Heart right ventricle (tissue), 16 donors: ENCODE measurements at regions of chr19 and their contacts with region 1.

Region 1: DNA sequence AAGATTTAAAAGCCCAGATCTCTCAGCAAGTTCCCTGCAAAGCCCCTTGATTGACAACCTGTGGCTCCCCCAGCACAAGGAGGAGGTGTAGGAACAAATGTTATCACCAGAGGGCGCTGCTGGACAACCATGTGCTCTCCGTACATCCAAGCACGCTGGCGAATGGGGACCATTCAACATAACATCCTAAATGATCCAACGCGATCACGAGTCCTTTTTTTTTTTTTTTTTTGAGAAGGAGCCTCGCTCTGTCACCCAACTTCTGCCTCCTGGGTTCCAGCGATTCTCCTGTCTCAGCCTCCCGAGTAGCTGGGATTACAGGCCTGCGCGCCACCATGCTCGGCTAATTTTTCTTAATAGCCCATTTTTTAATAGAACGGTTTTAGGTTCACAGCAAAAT is 52.0 kb downstream of the NWD1 start:
- DNase-seq: peak; percentile 50 to 80
- ATAC-seq: peak; percentile 67 to 89 (median 84)
- H3K4me3 ChIP-seq: no peak overlapping the region
- H3K27ac ChIP-seq: no peak overlapping the region
- H3K4me1 ChIP-seq: no peaks in the 10 kb centered on the region
- H3K27me3 ChIP-seq: peaks cover 0 to 3% (median 0%) of the 10 kb centered on the region in 7 donors
- CTCF ChIP-seq: peak; percentile 75 to 91 (median 83)

Region 2: GRCh38 chr19:16814526-16815100 is 43.0 kb after region 1 on chr19:
- intact Hi-C with region 1: no loop called
- DNase-seq: no peak
- ATAC-seq: no peak
- H3K4me3 ChIP-seq: no peak overlapping the region
- H3K27ac ChIP-seq: no peak overlapping the region
- H3K4me1 ChIP-seq: no peaks in the 10 kb centered on the region
- H3K27me3 ChIP-seq: no peaks in the 10 kb centered on the region
- CTCF ChIP-seq: no peak

Region 3: DNA sequence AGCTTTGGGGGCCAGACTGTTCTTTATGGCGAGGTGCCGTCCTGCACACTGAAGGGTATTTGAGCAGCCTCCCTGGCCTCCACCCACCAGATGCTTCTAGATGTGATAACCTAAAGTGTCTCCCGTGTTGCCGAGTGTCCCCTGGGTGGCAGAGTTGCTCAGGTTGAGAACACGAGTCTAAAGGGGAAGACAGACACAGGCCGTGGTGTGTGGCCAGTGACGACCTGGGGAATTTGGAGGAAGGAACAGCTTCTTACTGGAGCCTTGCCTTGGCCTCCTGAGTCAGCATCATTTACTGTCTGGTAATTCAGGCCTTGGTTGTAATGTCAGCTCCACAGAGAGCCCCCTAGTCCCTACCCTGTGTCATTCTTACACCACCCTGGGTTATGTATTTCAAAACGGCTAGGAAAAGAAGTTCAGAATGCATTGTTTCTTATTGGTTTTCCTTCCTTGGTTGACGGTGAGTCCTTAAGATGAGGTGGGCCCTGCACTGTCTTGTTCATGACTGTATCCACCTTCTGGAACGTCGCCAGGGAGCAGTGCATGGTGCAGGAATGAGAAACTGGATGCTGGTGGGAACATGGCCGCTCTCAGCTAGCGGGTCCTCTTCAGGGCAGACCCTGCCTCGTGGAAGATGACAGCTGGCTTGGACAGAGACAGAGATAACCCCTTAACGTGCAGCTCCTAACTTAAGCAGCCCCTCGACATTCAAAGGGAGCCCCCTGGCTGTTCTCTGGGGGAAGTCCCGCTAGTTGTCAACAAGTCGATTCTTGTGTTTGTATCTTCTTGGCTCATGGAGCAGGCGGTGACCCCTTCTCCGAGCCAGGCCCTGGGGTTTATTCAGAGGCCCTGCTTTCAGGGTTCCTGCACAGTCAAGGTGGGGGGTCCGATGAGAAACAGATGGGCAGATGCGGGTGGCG is 64.8 kb after region 1 on chr19:
- intact Hi-C with region 1: loop called in 2 of 10 experiments (anchors 5 to 10 kb)
- DNase-seq: no peak
- ATAC-seq: peak; percentile 31 to 72 (median 48)
- H3K4me3 ChIP-seq: no peak overlapping the region
- H3K27ac ChIP-seq: no peak overlapping the region
- H3K4me1 ChIP-seq: peaks cover 0 to 26% (median 1%) of the 10 kb centered on the region in 9 donors
- H3K27me3 ChIP-seq: no peaks in the 10 kb centered on the region
- CTCF ChIP-seq: peak in 2 of 9 donors; percentile 22 to 28

Region 4: DNA sequence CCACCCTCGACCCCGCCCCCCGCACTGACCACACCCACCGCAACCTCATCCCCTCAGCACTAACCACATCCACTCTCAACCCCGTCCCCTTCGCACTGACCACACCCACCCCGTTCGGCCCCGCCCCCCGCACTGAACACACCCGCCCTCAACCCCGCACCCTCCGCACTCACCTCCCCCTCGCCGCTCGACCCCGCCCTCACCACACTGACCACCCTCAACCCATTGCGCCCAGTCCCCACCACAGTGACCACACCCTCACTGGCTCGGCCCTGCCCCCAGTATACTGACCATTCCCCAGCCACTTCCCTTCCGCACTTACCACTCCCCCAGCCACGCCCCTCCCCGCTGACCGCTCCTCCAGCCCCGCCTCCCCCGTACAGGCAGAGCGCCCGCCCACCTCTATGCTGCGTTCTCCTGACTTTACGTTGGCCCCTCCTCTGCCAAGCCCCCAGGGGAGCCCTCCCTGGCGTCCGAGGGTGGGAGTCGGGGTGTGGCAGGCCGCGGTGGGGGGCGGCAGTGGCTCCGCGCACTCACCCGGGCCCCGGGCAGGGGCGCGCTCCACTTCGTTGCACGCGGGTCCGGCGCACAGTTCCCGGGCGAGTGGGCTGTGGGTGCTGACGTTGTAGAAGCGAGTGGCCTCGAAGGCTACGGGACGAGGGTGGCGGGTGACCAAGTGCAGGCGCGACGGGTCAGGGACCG is 125.7 kb after region 1 on chr19:
- intact Hi-C with region 1: loop called in 8 of 10 experiments (anchors 2 to 10 kb)
- DNase-seq: peak; percentile 96 to 97
- ATAC-seq: peak; percentile 90 to 94 (median 92)
- H3K4me3 ChIP-seq: peak overlapping the region; percentile 19 to 76 (median 66)
- H3K27ac ChIP-seq: peak overlapping the region; percentile 46 to 87 (median 74)
- H3K4me1 ChIP-seq: peaks cover 0 to 34% (median 15%) of the 10 kb centered on the region in 9 donors
- H3K27me3 ChIP-seq: peaks cover 0 to 19% (median 0%) of the 10 kb centered on the region in 7 donors
- CTCF ChIP-seq: no peak

Region 5: GRCh38 chr19:17052439-17053210 is 281.0 kb after region 1 on chr19:
- intact Hi-C with region 1: loop called (anchors 1 to 5 kb)
- DNase-seq: peak in 1 of 2 donors; percentile 31
- ATAC-seq: peak in 7 of 8 donors; percentile 42 to 73 (median 62)
- H3K4me3 ChIP-seq: no peak overlapping the region
- H3K27ac ChIP-seq: no peak overlapping the region
- H3K4me1 ChIP-seq: no peaks in the 10 kb centered on the region
- H3K27me3 ChIP-seq: no peaks in the 10 kb centered on the region
- CTCF ChIP-seq: peak; percentile 39 to 79 (median 68)

Region 6: GRCh38 chr19:17170538-17171297 is 399.1 kb after region 1 on chr19:
- intact Hi-C with region 1: no loop called
- DNase-seq: no peak
- ATAC-seq: no peak
- H3K4me3 ChIP-seq: no peak overlapping the region
- H3K27ac ChIP-seq: no peak overlapping the region
- H3K4me1 ChIP-seq: no peaks in the 10 kb centered on the region
- H3K27me3 ChIP-seq: no peaks in the 10 kb centered on the region
- CTCF ChIP-seq: no peak